Ovary (tissue), 10 donors: ENCODE measurements at regions of chr6 and their contacts with region 1.

Region 1: DNA sequence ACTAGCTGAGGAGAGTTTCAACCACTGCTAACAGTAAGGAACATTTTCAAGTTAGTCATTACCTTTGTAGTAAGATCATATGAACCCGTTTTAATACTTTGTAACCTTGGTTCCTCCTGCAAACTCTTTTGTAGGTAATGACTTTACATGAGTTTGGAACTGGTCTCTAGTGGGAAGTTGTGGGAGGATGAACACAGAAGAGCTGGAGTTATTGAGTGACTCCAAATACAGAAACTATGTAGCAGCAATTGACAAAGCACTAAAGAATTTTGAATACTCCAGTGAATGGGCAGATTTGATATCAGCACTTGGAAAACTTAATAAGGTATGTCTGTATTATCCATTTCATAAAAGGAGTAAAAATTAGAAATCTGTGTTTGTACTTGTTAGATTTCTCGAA is 29.3 kb downstream of the DOP1A start:
- DNase-seq: no peak
- H3K4me3 ChIP-seq: no peak overlapping the region
- H3K27ac ChIP-seq: no peak overlapping the region
- H3K4me1 ChIP-seq: peaks cover 3% of the 10 kb centered on the region
- H3K27me3 ChIP-seq: no peaks in the 10 kb centered on the region
- CTCF ChIP-seq: no peak
- EP300 ChIP-seq: no peak
- POLR2A ChIP-seq: no peak

Region 2: DNA sequence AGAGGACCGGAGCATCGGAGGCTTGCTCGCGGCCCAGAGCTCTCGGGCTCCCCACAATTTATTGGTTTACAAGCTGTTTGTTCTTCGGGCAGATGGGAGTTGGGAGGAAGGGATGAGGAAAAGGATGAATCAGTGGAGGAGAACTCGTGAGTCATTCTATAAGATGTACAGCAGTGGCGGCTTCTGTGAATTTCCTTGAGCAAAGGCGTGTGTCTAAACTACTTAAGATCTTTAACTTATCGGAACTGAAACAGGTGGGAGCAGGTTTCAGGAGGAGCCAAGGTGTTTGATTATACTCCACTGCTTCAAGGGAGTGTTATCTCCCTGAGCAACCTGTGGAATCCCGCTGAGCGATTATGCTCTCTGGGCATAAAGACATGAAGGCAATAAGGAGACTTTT is 798.8 kb before region 1 on chr6:
- intact Hi-C with region 1: loop called in 1 of 4 experiments (anchors 5 kb)
- DNase-seq: no peak
- H3K4me3 ChIP-seq: no peak overlapping the region
- H3K27ac ChIP-seq: no peak overlapping the region
- H3K4me1 ChIP-seq: no peaks in the 10 kb centered on the region
- H3K27me3 ChIP-seq: no peaks in the 10 kb centered on the region
- CTCF ChIP-seq: no peak
- EP300 ChIP-seq: no peak
- POLR2A ChIP-seq: no peak

Region 3: DNA sequence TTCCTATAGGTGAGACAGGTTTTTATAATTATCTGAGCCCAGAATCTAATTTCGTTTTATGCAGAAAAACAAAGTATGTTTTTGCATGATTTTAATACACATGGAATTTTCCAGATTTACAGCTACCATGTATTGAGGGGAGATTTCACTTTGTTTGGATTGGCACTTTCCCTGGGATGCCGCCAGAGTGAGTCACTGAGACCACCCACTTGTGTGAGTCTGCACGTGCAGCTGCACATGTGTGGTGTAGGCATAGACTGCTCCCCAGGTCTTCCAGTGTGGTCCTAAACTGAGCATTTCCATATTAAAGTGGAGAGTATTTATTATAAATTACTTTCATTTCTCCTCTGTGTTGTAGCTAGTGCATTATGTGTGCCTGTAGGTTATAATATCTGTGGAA is 218.0 kb before region 1 on chr6:
- intact Hi-C with region 1: no loop called
- DNase-seq: no peak
- H3K4me3 ChIP-seq: no peak overlapping the region
- H3K27ac ChIP-seq: no peak overlapping the region
- H3K4me1 ChIP-seq: no peaks in the 10 kb centered on the region
- H3K27me3 ChIP-seq: no peaks in the 10 kb centered on the region
- CTCF ChIP-seq: no peak
- EP300 ChIP-seq: no peak
- POLR2A ChIP-seq: no peak

Region 4: DNA sequence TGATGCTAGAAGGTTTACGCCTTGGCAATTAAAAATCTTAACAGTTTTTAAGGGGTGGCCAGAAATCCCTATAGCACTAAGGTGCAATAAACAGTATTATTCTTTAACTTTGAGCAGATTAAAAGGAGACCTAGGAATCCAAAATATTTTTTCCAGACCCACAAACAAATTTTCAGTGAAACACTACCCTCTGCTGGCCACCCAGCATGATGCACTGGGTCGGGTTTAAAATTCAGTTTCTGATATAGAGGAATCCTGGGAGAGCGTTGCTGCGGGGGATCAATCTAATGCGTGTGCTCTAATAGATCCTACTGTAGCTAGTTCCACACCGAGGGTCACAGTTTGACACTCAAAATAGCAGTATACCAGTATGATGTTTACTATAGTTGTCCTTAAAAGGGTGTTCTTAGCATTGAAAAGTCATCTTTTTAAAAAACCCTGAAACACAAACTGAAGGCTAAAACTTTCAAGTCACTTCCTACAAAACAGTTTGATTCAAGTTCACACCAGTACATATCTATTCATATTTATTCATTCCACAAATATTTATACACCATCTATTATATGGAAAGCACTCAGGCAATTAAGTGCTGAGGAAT is 41.3 kb before region 1 on chr6:
- intact Hi-C with region 1: no loop called
- DNase-seq: peak in 4 of 5 donors; percentile 32 to 49 (median 36)
- H3K4me3 ChIP-seq: no peak overlapping the region
- H3K27ac ChIP-seq: no peak overlapping the region
- H3K4me1 ChIP-seq: no peaks in the 10 kb centered on the region
- H3K27me3 ChIP-seq: no peaks in the 10 kb centered on the region
- CTCF ChIP-seq: peak; percentile 55 to 61 (median 59)
- EP300 ChIP-seq: no peak
- POLR2A ChIP-seq: no peak